CD14-positive monocyte (primary cell): ENCODE measurements at regions of chr14 and their contacts with region 1.

Region 1: GRCh38 chr14:68780358-68781160 is 12.3 kb downstream of the ZFP36L1 start:
- DNase-seq: peak; percentile 36 to 47 (median 38)
- H3K4me3 ChIP-seq: peak overlapping the region in 1 of 3 experiments; percentile 4
- H3K4me3 Mint-ChIP-seq: peak overlapping the region in 1 of 2 donors; percentile 69
- H3K27ac ChIP-seq: peak overlapping the region; percentile 18 to 39
- H3K27ac Mint-ChIP-seq: peak overlapping the region in 6 of 7 donors; percentile 10 to 87 (median 54)
- H3K4me1 ChIP-seq: peaks cover 17 to 18% of the 10 kb centered on the region in 2 donors
- H3K4me1 Mint-ChIP-seq: peaks cover 30% of the 10 kb centered on the region
- H3K27me3 ChIP-seq: peaks cover 0 to 5% of the 10 kb centered on the region in 2 donors
- H3K27me3 Mint-ChIP-seq: peaks cover 14 to 31% (median 25%) of the 10 kb centered on the region in 3 donors
- CTCF ChIP-seq: no peak

Region 2: DNA sequence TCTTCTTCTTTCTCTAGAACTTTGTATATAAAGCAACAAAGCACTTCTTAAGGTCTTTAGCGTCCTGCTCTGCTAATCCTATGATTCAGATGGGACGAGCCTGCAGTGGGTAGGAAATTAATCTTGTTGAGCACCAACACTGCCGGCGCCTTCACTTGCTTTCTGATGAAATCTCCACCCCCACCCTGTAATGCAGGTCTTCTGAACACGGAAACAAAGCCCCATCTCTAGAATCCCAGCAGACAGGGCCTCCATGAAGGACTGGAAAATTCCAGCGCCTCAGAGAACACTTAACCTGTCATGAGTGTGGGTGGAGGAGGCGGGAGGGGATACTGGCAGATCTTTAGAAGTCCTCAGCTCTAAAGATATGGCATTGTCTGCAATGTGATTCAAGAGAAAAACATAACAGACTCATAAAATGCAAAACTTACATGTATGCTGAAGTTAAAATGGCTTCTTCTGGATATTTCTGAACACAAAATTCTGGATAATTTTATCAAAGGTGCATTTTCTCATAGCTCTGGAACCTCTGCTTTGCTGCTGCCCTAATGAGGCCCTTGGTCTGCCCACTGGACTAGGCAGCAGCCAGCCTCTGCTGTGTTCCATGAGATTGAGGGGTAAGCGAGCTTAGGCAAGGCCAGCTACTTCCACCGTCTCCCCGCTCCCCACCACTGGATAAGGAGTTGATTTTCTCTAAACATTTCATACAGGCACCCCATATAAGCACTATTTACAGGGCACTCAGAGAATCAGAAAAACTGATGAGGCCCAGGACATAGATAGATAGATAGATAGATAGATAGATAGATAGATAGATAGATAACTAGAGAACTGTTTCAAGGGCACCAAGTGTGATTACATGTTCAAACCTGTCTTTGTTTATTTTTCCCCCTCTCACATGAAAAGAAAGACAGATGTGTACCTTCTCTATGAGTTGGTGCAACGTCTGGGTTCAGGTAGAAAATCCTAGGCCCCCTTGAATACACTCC is 30.8 kb before region 1 on chr14:
- intact Hi-C with region 1: loop called in 1 of 2 experiments (anchors 5 kb)
- DNase-seq: no peak
- H3K4me3 ChIP-seq: no peak overlapping the region
- H3K4me3 Mint-ChIP-seq: peak overlapping the region in 1 of 2 donors; percentile 62
- H3K27ac ChIP-seq: no peak overlapping the region
- H3K27ac Mint-ChIP-seq: no peak overlapping the region
- H3K4me1 ChIP-seq: no peaks in the 10 kb centered on the region
- H3K4me1 Mint-ChIP-seq: peaks cover 5% of the 10 kb centered on the region
- H3K27me3 ChIP-seq: peaks cover 81 to 97% of the 10 kb centered on the region in 2 donors
- H3K27me3 Mint-ChIP-seq: peaks cover 83 to 98% (median 91%) of the 10 kb centered on the region in 3 donors
- CTCF ChIP-seq: no peak